ENCODE measurements at regions of chr19 and their contacts with region 1.

Region 1: GRCh38 chr19:6632002-6632621 is 37.8 kb downstream of the TNFSF14 start:
- DNase-seq: peak; percentile 72 to 89
- H3K4me3 ChIP-seq: no peak overlapping the region
- H3K27ac ChIP-seq: no peak overlapping the region
- H3K4me1 ChIP-seq: peaks cover 0 to 5% (median 1%) of the 10 kb centered on the region in 4 donors
- H3K27me3 ChIP-seq: peaks cover 0 to 17% (median 0%) of the 10 kb centered on the region in 3 donors
- CTCF ChIP-seq: peak in 5 of 7 experiments; percentile 70 to 87 (median 72)
- EP300 ChIP-seq: no peak
- POLR2A ChIP-seq: no peak

Region 2: GRCh38 chr19:6516659-6517291 is 115.3 kb before region 1 on chr19:
- intact Hi-C with region 1: loop called (anchors 10 kb)
- DNase-seq: peak; percentile 92 to 95
- H3K4me3 ChIP-seq: peak overlapping the region; percentile 60 to 65 (median 63)
- H3K27ac ChIP-seq: peak overlapping the region; percentile 25 to 77 (median 66)
- H3K4me1 ChIP-seq: peaks cover 0 to 36% (median 17%) of the 10 kb centered on the region in 4 donors
- H3K27me3 ChIP-seq: peaks cover 0 to under 1% (median 0%) of the 10 kb centered on the region in 3 donors
- CTCF ChIP-seq: peak in 5 of 7 experiments; percentile 89 to 98 (median 91)
- EP300 ChIP-seq: no peak
- POLR2A ChIP-seq: no peak

Region 3: GRCh38 chr19:6587093-6587820 is 44.9 kb before region 1 on chr19:
- intact Hi-C with region 1: no loop called
- DNase-seq: peak in 1 of 2 donors; percentile 13
- H3K4me3 ChIP-seq: no peak overlapping the region
- H3K27ac ChIP-seq: no peak overlapping the region
- H3K4me1 ChIP-seq: peaks cover 0 to 43% (median 19%) of the 10 kb centered on the region in 4 donors
- H3K27me3 ChIP-seq: peaks cover 10 to 97% (median 65%) of the 10 kb centered on the region in 3 donors
- CTCF ChIP-seq: no peak
- EP300 ChIP-seq: no peak
- POLR2A ChIP-seq: no peak

Region 4: DNA sequence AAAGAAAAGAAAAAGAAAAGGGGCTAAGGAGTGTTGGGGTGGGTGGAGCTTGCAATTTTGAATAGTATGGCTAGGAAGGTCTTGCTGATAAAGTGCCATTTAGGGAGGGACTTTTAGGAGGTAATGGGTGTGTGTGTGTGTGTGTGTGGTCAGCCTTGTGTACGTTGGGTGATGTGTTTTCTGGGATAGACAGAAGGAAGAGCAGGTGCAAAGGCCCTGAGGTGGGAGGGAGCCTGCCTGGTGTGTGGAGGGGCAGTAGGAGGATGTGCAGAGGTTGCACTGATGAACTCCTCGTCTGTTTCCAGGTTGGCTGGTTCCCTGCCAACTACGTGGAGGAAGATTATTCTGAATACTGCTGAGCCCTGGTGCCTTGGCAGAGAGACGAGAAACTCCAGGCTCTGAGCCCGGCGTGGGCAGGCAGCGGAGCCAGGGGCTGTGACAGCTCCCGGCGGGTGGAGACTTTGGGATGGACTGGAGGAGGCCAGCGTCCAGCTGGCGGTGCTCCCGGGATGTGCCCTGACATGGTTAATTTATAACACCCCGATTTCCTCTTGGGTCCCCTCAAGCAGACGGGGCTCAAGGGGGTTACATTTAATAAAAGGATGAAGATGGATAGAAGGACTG is 224.7 kb after region 1 on chr19:
- intact Hi-C with region 1: loop called (anchors 10 kb)
- DNase-seq: no peak
- H3K4me3 ChIP-seq: no peak overlapping the region
- H3K27ac ChIP-seq: no peak overlapping the region
- H3K4me1 ChIP-seq: no peaks in the 10 kb centered on the region
- H3K27me3 ChIP-seq: peaks cover 0 to 24% (median 0%) of the 10 kb centered on the region in 3 donors
- CTCF ChIP-seq: no peak
- EP300 ChIP-seq: no peak
- POLR2A ChIP-seq: no peak